ENCODE measurements at regions of chr17 and their contacts with region 1.

Region 1: GRCh38 chr17:31803494-31804213 is 55.4 kb downstream of the COPRS start:
- DNase-seq: peak; percentile 31
- ATAC-seq: peak; percentile 29
- H3K4me3 ChIP-seq: no peak overlapping the region
- H3K27ac ChIP-seq: no peak overlapping the region
- H3K4me1 ChIP-seq: peaks cover 6% of the 10 kb centered on the region; the same call in 1 of the 2 replicates
- H3K27me3 ChIP-seq: no peaks in the 10 kb centered on the region
- CTCF ChIP-seq: no peak

Region 2: GRCh38 chr17:31487648-31488263 is 315.9 kb before region 1 on chr17:
- CTCF ChIA-PET with region 1: no interaction called
- POLR2A ChIA-PET with region 1: interaction called, 15 read pairs
- intact Hi-C with region 1: no loop called
- DNase-seq: peak; percentile 90
- ATAC-seq: peak; percentile 92
- H3K4me3 ChIP-seq: peak overlapping the region; percentile 66
- H3K27ac ChIP-seq: no peak overlapping the region
- H3K4me1 ChIP-seq: peaks cover 4% of the 10 kb centered on the region; the same call in 1 of the 2 replicates
- H3K27me3 ChIP-seq: no peaks in the 10 kb centered on the region
- CTCF ChIP-seq: no peak

Region 3: DNA sequence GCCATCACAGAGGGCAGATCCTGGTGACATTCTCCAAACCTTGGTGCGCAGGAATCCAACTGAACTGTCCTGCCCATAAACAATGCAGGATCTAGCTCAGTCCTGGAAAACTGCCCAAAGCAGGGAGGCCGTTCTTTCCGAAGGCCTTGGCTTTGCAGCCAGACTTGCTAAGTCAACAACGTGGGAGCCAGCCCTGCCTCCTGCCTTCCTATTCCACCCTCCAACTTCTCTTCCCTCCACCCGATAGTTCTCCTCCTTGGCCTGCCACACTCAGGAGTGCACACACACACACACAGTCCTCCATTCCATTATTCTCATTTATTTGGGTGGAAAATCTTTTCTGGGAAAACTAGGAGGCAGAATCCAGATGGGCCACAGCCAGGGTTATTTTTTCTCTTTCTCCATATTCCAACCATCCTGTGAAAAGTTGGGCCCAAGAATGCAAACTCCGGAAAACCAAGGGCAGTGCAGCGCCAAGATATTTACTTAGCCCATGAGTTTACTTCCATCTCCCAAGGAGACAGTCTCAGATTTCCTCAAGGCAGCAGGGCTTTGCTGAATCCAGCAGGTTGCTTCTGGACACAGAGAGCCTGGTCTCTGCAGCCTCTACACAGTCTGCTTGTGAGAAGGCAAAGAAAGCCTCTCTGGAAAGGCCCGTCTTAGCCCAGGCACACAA is 39.6 kb after region 1 on chr17:
- CTCF ChIA-PET with region 1: no interaction called
- POLR2A ChIA-PET with region 1: no interaction called
- intact Hi-C with region 1: no loop called
- DNase-seq: peak; percentile 38
- ATAC-seq: peak; percentile 71
- H3K4me3 ChIP-seq: no peak overlapping the region
- H3K27ac ChIP-seq: no peak overlapping the region
- H3K4me1 ChIP-seq: peaks cover 15% of the 10 kb centered on the region
- H3K27me3 ChIP-seq: no peaks in the 10 kb centered on the region
- CTCF ChIP-seq: no peak